ENCODE measurements at regions of chr9 and their contacts with region 1.

Region 1: GRCh38 chr9:826500-827280 is 14.8 kb upstream of the DMRT1 start:
- DNase-seq: no peak
- H3K4me3 ChIP-seq: no peak overlapping the region
- H3K27ac ChIP-seq: no peak overlapping the region
- H3K27me3 ChIP-seq: no peaks in the 10 kb centered on the region
- CTCF ChIP-seq: no peak

Region 2: GRCh38 chr9:806285-807156 is 20.2 kb before region 1 on chr9:
- CTCF ChIA-PET with region 1: no interaction called
- POLR2A ChIA-PET with region 1: no interaction called
- DNase-seq: peak; percentile 29
- H3K4me3 ChIP-seq: no peak overlapping the region
- H3K27ac ChIP-seq: no peak overlapping the region
- H3K27me3 ChIP-seq: no peaks in the 10 kb centered on the region
- CTCF ChIP-seq: peak; percentile 84

Region 3: DNA sequence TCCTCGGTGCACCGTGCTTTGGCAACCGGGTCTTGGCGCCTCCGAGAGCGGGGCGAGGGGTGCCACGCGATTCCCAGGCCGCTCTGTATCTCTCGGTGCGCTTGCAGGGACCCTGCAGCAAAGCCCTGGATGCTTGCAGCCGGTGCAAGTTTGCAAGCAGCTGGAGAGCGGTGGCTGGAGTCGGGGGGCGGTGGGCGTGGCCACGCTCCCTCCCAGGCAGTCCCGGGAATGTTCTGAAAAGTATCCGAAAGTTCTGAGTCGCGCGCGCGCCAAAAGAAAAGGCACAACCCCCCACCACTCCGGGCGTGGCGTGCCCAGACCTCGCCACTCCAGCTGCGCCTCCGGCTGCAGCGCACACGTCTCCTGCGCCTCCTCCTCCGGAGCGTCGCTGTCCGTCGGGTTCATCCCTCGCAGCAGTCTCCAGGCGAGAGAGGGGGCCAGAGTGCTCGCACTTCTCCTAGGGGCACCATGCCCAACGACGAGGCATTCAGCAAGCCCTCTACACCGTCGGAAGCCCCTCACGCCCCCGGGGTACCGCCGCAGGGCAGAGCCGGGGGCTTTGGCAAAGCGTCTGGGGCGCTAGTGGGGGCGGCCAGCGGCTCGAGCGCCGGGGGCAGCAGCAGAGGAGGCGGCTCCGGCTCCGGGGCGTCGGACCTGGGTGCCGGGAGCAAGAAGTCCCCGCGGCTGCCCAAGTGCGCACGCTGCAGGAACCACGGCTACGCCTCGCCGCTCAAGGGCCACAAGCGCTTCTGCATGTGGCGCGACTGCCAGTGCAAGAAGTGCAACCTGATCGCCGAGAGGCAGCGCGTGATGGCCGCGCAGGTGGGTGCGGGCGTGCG is 14.9 kb after region 1 on chr9 and contains the start of gene DMRT1:
- CTCF ChIA-PET with region 1: no interaction called
- POLR2A ChIA-PET with region 1: no interaction called
- DNase-seq: no peak
- H3K4me3 ChIP-seq: no peak within 1 kb of the TSS
- H3K27ac ChIP-seq: no peak within 1 kb of the TSS
- H3K27me3 ChIP-seq: peaks cover 34% of the 10 kb centered on the region
- CTCF ChIP-seq: no peak
- polyA plus RNA-seq, gene DMRT1: not detected in 2 replicates

Region 4: GRCh38 chr9:928362-929042 is 101.8 kb after region 1 on chr9:
- CTCF ChIA-PET with region 1: no interaction called
- POLR2A ChIA-PET with region 1: interaction called, 10 read pairs
- DNase-seq: no peak
- H3K4me3 ChIP-seq: no peak overlapping the region
- H3K27ac ChIP-seq: no peak overlapping the region
- H3K27me3 ChIP-seq: peaks cover under 1% of the 10 kb centered on the region
- CTCF ChIP-seq: peak; percentile 47